GM23248 (cell line): ENCODE measurements at regions of chr6 and their contacts with region 1.

Region 1: GRCh38 chr6:3281631-3282475 is 23.1 kb downstream of the PSMG4 start:
- DNase-seq: peak; percentile 95
- H3K4me3 ChIP-seq: no peak overlapping the region; the same call in 1 of the 2 replicates
- H3K27ac ChIP-seq: peak overlapping the region; percentile 88
- H3K4me1 ChIP-seq: peaks cover 22% of the 10 kb centered on the region
- H3K27me3 ChIP-seq: no peaks in the 10 kb centered on the region

Region 2: DNA sequence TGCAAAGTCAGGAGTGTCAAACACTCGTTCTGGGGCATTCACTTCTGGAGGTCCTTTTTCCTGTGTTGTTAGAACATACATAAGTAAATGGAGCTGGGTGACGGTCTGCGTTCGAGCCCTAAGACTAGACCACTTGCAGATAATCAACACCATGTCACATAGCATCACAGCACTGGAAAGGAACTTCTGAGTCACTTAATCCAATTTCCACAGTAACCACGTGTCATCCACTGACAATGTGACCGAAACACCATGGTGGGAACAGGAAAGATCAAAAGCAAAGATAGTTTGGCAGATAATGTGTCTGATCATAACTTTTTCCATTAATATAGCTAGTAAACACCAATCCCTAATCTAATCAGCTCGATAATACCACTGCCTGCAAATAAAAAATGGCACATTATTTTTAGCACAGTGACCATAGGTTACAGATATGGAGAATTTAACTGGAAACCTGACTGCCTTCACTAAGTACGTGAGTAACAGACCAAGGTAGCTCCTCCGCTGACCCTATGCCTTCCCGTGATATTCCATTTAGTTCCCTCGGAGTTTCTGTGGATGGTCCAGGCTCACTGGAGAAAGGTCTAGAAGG is 481.8 kb before region 1 on chr6:
- in situ Hi-C with region 1: no loop called
- DNase-seq: no peak
- H3K4me3 ChIP-seq: no peak overlapping the region
- H3K27ac ChIP-seq: no peak overlapping the region
- H3K4me1 ChIP-seq: no peaks in the 10 kb centered on the region
- H3K27me3 ChIP-seq: no peaks in the 10 kb centered on the region

Region 3: GRCh38 chr6:3732345-3733141 is 450.7 kb after region 1 on chr6:
- in situ Hi-C with region 1: loop called (anchors 5 kb)
- DNase-seq: peak; percentile 96
- H3K4me3 ChIP-seq: no peak overlapping the region
- H3K27ac ChIP-seq: peak overlapping the region; percentile 43
- H3K4me1 ChIP-seq: peaks cover 11% of the 10 kb centered on the region
- H3K27me3 ChIP-seq: no peaks in the 10 kb centered on the region

Region 4: DNA sequence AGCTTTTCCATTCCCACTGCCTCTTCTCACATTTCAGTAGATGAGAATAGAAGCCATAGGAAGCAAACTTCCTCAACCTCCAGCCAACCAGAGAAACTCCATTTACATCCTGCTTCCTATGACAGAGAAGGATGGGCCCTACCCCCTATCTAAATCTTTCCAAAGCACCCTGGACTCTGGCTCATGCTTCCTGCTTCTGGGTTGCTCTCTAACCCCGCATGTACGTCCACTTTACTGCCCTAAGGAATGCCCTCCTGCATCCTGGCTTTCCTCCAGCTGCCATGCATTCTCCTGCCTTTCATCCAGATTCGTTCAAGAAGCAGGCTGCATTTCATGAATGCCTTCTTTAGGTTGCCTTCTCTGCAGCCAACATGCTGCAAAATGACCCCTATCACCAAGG is 705.2 kb after region 1 on chr6:
- in situ Hi-C with region 1: loop called (anchors 10 kb)
- DNase-seq: no peak
- H3K4me3 ChIP-seq: no peak overlapping the region
- H3K27ac ChIP-seq: no peak overlapping the region
- H3K4me1 ChIP-seq: 0 out of 2 replicates have a peak, but pooled peaks cover 3% of the 10 kb centered on the region
- H3K27me3 ChIP-seq: no peaks in the 10 kb centered on the region